Left cardiac atrium (tissue), 4 donors: ENCODE measurements at regions of chr13 and their contacts with region 1.

Region 1: DNA sequence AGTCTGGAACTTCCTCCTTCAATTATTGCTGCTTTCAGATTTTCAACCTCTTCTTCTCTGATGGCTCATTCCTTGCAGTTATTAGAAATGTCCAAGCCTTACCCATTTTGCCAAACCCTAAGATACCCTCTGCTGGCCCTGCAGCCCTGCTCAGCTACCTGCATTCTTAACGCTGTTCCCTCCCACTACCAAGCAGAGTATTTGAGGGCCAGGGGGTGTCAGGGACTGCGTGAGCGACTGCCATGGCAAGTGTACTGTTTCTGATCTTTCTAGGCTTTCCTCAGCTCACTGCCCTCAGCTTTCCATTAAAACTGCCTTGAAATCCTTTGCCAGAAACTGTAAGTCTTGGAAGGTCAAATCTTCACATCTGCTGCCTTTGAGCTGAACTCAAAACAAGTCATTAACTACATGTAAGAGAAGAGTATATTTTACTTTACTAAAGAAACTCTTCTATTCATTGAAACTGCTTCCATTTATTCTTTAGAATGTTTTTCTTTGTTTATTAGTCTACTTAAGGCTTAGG is 41.0 kb downstream of the HS6ST3 start:
- DNase-seq: no peak
- ATAC-seq: no peak

Region 2: DNA sequence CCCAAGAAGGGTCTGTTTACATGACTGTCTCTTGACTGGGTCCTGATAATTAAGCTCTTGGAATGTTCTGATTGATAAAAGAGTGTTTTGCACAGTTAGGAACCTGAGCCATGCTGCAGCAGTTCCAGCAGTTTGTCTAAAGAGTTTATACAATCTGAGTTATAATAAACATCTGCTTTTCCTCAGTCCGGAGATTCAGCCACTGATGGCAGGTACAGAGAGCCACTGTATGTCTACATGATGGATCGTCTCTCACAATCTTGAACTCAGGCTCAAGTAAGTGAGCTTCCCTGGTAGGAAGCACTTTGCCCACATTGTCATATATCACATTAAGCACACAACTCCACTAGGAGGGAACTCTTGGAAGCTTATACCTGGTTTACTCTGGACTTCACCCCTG is 162.0 kb before region 1 on chr13:
- intact Hi-C with region 1: no loop called
- DNase-seq: no peak
- ATAC-seq: no peak

Region 3: GRCh38 chr13:96822895-96823294 is 692.0 kb after region 1 on chr13:
- intact Hi-C with region 1: loop called in 1 of 2 experiments (anchors 10 kb)
- DNase-seq: no peak
- ATAC-seq: peak in 1 of 2 donors; percentile 16